Activated naive CD4-positive, alpha-beta T cell treated with anti-CD3 and anti-CD28 coated beads, Interleukin-2, amount 10 ng/mL, durations not matched to agents 7 days and 5 days (primary cell): ENCODE measurements at regions of chr10 and their contacts with region 1.

Region 1: DNA sequence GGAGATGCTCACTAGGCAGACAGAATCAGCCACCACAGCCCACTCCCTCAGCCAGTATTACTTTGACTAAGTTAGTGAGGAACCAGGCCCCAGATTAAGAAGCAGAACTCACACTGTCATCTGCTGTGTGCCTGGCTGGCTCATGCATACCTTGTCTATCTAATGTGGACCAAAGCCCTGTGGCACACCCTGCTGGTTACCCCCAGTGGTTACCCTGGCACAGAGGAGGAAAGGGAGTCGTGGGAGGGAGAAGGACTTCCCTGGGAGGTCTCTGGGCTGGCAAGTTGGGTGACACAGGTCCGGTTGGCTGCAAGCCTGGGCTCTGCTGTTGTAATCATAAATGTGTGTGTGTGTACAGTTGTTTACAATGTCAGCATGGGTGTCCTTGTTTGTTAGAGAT is 7.5 kb upstream of the SH2D4B start:
- DNase-seq: peak; percentile 70
- H3K4me3 Mint-ChIP-seq: peak overlapping the region; percentile 42
- H3K27ac Mint-ChIP-seq: peak overlapping the region; percentile 95
- H3K4me1 Mint-ChIP-seq: peaks cover 77% of the 10 kb centered on the region
- H3K27me3 Mint-ChIP-seq: no peaks in the 10 kb centered on the region

Region 2: GRCh38 chr10:80509403-80510161 is 20.7 kb before region 1 on chr10:
- CTCF ChIA-PET with region 1: interaction called, 15 read pairs
- DNase-seq: no peak
- H3K4me3 Mint-ChIP-seq: no peak overlapping the region
- H3K27ac Mint-ChIP-seq: peak overlapping the region; percentile 47
- H3K4me1 Mint-ChIP-seq: peaks cover 52% of the 10 kb centered on the region
- H3K27me3 Mint-ChIP-seq: peaks cover 3% of the 10 kb centered on the region

Region 3: GRCh38 chr10:80589726-80590373 is 59.6 kb after region 1 on chr10:
- CTCF ChIA-PET with region 1: no interaction called
- DNase-seq: no peak
- H3K4me3 Mint-ChIP-seq: no peak overlapping the region
- H3K27ac Mint-ChIP-seq: no peak overlapping the region
- H3K4me1 Mint-ChIP-seq: no peaks in the 10 kb centered on the region
- H3K27me3 Mint-ChIP-seq: peaks cover 5% of the 10 kb centered on the region

Region 4: GRCh38 chr10:80612261-80612660 is 82.0 kb after region 1 on chr10:
- CTCF ChIA-PET with region 1: no interaction called
- DNase-seq: no peak
- H3K4me3 Mint-ChIP-seq: no peak overlapping the region
- H3K27ac Mint-ChIP-seq: no peak overlapping the region
- H3K4me1 Mint-ChIP-seq: no peaks in the 10 kb centered on the region
- H3K27me3 Mint-ChIP-seq: peaks cover 16% of the 10 kb centered on the region

Region 5: DNA sequence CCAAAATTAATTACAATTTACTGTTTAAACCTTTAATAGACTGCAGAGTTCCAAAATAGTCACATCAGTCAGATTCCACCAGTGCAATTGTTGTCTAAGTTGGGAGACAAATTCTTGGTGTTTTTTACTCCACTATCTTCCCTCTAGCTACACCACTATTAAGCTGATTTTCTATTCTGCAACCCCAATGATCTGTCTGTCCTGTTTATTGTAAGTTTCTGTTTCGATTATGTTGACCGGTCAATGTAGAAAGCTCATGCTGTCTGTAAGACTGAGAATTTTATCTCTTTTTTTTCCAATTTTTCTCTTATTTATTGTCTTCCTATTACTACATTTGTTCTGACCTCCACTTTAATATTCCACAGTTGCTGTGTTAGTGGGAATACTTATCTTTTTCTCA is 565.0 kb after region 1 on chr10:
- CTCF ChIA-PET with region 1: no interaction called
- DNase-seq: no peak
- H3K4me3 Mint-ChIP-seq: no peak overlapping the region
- H3K27ac Mint-ChIP-seq: no peak overlapping the region
- H3K4me1 Mint-ChIP-seq: no peaks in the 10 kb centered on the region
- H3K27me3 Mint-ChIP-seq: no peaks in the 10 kb centered on the region